ENCODE measurements at regions of chr4 and their contacts with region 1.

Region 1: DNA sequence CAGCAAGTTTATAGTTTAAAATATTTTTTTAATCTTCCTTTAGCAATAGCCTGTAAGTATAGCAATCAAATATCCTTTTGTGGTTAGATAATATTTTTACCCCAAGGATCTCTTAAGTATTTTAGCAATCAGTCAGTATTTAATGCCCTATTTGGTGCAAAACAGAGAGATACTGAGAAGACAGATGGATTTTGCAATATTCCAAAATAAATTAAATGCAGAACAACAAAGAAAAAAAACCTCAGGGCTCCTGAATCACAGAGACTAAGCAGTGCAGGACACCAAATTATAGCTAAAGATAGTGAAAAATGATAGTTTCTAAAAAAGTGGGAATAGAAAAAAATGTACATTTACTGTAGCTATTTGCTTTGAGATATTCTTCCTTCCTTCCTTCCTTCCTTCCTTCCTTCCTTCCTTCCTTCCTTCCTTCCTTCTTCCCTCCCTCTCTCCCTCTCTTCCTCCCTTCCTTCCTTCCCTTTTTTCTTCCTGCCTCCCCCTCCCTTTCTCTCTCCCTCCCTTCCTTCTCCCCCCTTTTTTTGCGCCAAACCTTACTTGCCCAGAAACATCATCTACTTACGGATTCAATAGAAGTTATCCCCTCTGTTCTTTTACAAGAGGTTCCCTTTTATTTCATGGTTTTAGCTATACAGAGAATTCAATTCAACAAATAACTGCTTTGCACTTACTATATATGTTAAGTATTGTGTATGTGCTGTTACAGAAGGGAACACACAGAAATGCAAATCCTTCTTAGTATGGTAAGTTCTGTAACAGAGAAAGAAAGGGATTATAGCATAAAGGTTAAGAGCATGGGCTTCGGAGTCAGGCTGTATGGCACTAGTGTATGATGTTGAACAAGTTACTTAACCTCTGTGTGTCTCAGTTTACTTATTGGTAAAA is 219.0 kb downstream of the CPE start:
- DNase-seq: peak; percentile 87
- H3K4me3 ChIP-seq: no peak overlapping the region
- H3K27ac ChIP-seq: peak overlapping the region; percentile 89
- H3K4me1 ChIP-seq: peaks cover 29% of the 10 kb centered on the region
- H3K27me3 ChIP-seq: no peaks in the 10 kb centered on the region
- CTCF ChIP-seq: no peak

Region 2: DNA sequence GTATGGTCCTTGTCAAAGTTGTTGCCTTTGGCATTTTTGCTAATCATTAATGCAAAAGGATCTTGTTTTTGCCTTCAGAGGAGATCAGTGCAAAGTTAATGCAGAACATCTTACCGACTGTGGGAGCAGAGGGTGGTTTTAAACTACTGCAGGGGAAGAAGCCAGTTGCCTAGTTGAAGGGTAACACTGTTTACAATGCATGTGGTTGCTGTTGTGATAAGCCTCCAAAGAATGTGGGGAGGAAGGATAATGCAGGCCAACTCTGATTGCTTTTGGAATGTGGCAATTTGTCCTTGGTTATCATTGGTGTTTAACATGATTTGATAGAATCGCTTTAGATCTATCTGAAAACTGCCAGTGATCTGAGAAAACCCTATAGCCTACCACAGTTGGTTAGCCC is 70.9 kb after region 1 on chr4:
- CTCF ChIA-PET with region 1: interaction called, 4 read pairs
- POLR2A ChIA-PET with region 1: interaction called, 9 read pairs
- intact Hi-C with region 1: loop called (anchors 5 kb)
- DNase-seq: peak; percentile 46
- H3K4me3 ChIP-seq: no peak overlapping the region
- H3K27ac ChIP-seq: peak overlapping the region; percentile 33
- H3K4me1 ChIP-seq: peaks cover 47% of the 10 kb centered on the region
- H3K27me3 ChIP-seq: no peaks in the 10 kb centered on the region
- CTCF ChIP-seq: no peak

Region 3: DNA sequence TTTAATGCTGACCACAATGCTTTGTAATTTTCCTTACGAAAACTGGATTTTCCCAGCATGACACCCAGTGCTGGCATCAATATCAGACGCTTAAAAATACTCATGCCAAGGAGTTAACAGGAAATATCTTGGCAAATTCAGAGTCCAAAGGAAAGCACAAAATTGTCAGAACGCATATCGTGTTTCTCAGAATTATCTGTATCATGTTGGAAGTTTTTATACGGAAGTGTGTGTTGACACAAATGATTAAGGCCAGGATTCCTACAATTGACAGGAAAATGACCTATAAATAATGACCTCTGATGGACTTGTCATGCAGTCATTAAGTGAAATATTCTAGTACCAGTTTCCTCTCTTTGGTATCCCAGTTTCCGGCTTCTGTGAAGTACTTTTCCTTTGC is 143.1 kb after region 1 on chr4:
- CTCF ChIA-PET with region 1: no interaction called
- POLR2A ChIA-PET with region 1: no interaction called
- intact Hi-C with region 1: loop called (anchors 1 kb)
- DNase-seq: peak; percentile 83
- H3K4me3 ChIP-seq: no peak overlapping the region
- H3K27ac ChIP-seq: peak overlapping the region; percentile 66
- H3K4me1 ChIP-seq: peaks cover 38% of the 10 kb centered on the region
- H3K27me3 ChIP-seq: no peaks in the 10 kb centered on the region
- CTCF ChIP-seq: no peak

Region 4: DNA sequence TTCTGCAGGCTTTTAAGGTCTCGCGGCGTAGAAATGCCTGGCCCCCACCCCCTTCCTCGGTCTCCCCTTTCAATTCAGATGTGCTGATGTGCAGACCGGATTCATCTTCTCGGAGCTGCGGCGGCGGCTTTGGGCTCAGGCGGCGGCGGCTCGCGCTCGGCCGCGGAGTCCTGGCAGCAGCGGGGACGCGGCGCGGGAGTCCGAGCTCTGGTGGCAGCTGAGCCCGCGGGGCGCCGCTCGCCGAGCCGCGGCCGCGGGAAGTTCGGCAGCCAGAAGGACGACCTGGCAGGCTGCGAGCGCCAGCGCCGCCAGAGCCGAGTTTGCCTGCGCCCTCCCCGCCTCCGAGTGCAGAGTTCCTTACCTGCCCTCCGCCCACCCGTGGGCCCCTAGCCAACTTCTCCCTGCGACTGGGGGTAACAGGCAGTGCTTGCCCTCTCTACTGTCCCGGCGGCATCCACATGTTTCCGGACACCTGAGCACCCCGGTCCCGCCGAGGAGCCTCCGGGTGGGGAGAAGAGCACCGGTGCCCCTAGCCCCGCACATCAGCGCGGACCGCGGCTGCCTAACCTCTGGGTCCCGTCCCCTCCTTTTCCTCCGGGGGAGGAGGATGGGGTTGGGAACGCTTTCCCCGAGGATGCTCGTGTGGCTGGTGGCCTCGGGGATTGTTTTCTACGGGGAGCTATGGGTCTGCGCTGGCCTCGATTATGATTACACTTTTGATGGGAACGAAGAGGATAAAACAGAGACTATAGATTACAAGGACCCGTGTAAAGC is 275.7 kb after region 1 on chr4:
- CTCF ChIA-PET with region 1: no interaction called
- POLR2A ChIA-PET with region 1: no interaction called
- intact Hi-C with region 1: loop called (anchors 5 kb)
- DNase-seq: peak; percentile 53
- H3K4me3 ChIP-seq: peak overlapping the region; percentile 61
- H3K27ac ChIP-seq: peak overlapping the region; percentile 43
- H3K4me1 ChIP-seq: peaks cover 10% of the 10 kb centered on the region
- H3K27me3 ChIP-seq: peaks cover 52% of the 10 kb centered on the region
- CTCF ChIP-seq: no peak

Region 5: GRCh38 chr4:166091912-166092510 is 494.2 kb after region 1 on chr4:
- CTCF ChIA-PET with region 1: no interaction called
- POLR2A ChIA-PET with region 1: no interaction called
- intact Hi-C with region 1: loop called (anchors 5 kb)
- DNase-seq: peak; percentile 59
- H3K4me3 ChIP-seq: no peak overlapping the region
- H3K27ac ChIP-seq: no peak overlapping the region
- H3K4me1 ChIP-seq: peaks cover 10% of the 10 kb centered on the region
- H3K27me3 ChIP-seq: no peaks in the 10 kb centered on the region
- CTCF ChIP-seq: peak; percentile 80